ENCODE measurements at regions of chr4 and their contacts with region 1.

Region 1: DNA sequence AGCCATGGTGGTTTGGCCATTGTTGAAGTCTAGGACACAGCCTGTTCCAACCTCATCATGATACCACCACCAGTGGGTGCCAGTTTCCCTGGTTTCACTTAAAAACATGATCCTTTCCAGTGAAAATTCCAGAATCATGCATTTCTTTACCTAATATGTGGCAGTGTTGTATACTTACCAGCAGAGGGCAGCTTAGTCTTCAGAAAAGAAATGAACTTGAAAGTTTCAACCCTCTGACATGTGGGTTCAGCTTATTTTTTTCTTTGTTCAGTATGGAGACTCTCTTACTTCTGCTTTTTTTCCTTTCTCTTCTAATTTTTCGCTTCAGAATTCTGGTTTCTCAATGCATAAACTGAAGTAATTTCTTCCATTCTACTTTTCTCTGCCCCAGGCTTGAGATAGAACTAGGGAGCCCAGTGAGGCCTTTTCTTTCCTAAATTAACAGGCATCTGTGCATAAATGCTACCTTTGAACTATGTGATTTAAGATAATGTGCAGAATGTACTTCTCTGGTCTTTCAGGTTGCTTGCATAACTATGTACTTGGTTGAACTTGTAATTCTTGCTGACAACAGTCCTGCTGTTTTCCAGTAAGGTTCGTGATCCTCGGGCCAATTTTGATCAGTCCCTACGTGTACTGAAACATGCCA is 10.7 kb downstream of the LIAS start:
- DNase-seq: peak; percentile 86
- ATAC-seq: peak; percentile 97
- H3K4me3 ChIP-seq: no peak overlapping the region
- H3K27ac ChIP-seq: peak overlapping the region; percentile 23; the same call in 1 of the 2 replicates
- H3K4me1 ChIP-seq: peaks cover 2 to 13% of the 10 kb centered on the region in 2 experiments; a peak in 2 of 4 replicates
- H3K27me3 ChIP-seq: no peaks in the 10 kb centered on the region
- CTCF ChIP-seq: peak; percentile 81 to 99 (median 97)
- POLR2A ChIP-seq: no peak
- RAD21 ChIP-seq: peak; percentile 96

Region 2: GRCh38 chr4:39458505-39459300 is 10.8 kb before region 1 on chr4 and contains the starts of genes LIAS and RPL9:
- CTCF ChIA-PET with region 1: interaction called, 14 read pairs
- POLR2A ChIA-PET with region 1: interaction called, 14 read pairs
- RAD21 ChIA-PET with region 1: no interaction called
- intact Hi-C with region 1: no loop called
- DNase-seq: peak; percentile 99
- ATAC-seq: peak; percentile 90
- H3K4me3 ChIP-seq: peak within 1 kb of the TSS; percentile 88 to 97
- H3K27ac ChIP-seq: peak within 1 kb of the TSS; percentile 97
- H3K4me1 ChIP-seq: peaks cover 5 to 21% of the 10 kb centered on the region in 2 experiments; a peak in 3 of 4 replicates
- H3K27me3 ChIP-seq: no peaks in the 10 kb centered on the region
- CTCF ChIP-seq: no peak
- POLR2A ChIP-seq: peak; percentile 97
- RAD21 ChIP-seq: no peak
- total RNA-seq, gene LIAS: 23.5 TPM
- total RNA-seq, gene RPL9: 1,657 TPM

Region 3: DNA sequence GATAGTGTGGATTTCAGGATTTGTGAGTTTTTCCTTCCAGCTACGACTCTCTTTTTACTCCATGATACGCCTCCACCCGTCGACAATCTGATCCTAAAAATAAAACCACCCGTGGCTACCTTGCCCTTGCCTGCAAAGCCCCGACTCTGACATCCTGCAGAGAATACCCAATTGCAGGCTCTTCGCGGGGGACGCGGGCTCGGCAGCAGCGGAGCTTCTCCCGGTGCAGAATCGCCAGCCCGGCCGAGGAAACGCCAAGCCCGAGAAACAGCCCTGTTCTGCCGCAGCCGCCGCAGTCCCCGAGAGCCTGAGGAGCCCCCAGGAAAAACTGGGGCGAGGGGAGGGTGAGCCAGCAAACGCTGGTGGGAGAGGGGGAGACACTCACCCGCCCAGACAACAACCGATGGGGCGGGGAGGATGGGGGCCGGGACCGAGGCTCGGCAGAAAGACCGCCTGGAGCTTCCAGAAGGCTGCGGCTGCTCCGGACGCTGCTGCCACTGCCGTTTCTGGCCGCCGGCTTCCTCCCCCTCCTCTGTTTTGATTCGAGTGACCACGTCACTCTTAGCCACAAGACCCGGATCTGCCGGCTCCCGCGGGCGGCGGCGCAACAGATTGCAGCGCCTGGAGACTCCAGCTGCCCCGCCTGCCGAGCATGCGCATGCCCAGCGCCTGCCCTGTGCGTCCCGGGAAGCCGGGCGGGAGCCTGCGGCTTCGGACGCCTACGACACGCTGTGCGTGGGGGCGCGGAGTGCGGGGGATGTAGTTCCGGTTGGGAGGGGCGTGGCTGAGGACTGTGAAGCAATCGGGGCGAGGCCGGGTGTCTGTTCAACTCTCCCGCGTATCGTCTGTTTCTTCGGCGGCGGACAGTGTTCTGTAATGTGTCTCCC is 169.0 kb after region 1 on chr4 and contains the start of gene SMIM14:
- CTCF ChIA-PET with region 1: interaction called, 7 read pairs
- POLR2A ChIA-PET with region 1: interaction called, 3 read pairs
- RAD21 ChIA-PET with region 1: no interaction called
- intact Hi-C with region 1: loop called (anchors 5 kb)
- DNase-seq: peak; percentile 93
- ATAC-seq: peak; percentile 93
- H3K4me3 ChIP-seq: peak within 1 kb of the TSS; percentile 90 to 91
- H3K27ac ChIP-seq: peak within 1 kb of the TSS; percentile 72
- H3K4me1 ChIP-seq: peaks cover 16 to 28% of the 10 kb centered on the region in 2 experiments
- H3K27me3 ChIP-seq: no peaks in the 10 kb centered on the region
- CTCF ChIP-seq: no peak
- POLR2A ChIP-seq: peak; percentile 82
- RAD21 ChIP-seq: peak; percentile 6; the same call in 1 of the 2 replicates
- total RNA-seq, gene SMIM14: 21.6 TPM

Region 4: GRCh38 chr4:39697740-39698423 is 228.3 kb after region 1 on chr4 and contains the start of gene UBE2K:
- CTCF ChIA-PET with region 1: no interaction called
- POLR2A ChIA-PET with region 1: no interaction called
- RAD21 ChIA-PET with region 1: no interaction called
- intact Hi-C with region 1: loop called (anchors 10 kb)
- DNase-seq: peak; percentile 71
- ATAC-seq: peak; percentile 94
- H3K4me3 ChIP-seq: peak within 1 kb of the TSS; percentile 66 to 98
- H3K27ac ChIP-seq: peak within 1 kb of the TSS; percentile 88
- H3K4me1 ChIP-seq: peaks cover 11 to 36% of the 10 kb centered on the region in 2 experiments
- H3K27me3 ChIP-seq: no peaks in the 10 kb centered on the region
- CTCF ChIP-seq: no peak
- POLR2A ChIP-seq: peak; percentile 89
- RAD21 ChIP-seq: no peak
- total RNA-seq, gene UBE2K: 126 TPM

Region 5: DNA sequence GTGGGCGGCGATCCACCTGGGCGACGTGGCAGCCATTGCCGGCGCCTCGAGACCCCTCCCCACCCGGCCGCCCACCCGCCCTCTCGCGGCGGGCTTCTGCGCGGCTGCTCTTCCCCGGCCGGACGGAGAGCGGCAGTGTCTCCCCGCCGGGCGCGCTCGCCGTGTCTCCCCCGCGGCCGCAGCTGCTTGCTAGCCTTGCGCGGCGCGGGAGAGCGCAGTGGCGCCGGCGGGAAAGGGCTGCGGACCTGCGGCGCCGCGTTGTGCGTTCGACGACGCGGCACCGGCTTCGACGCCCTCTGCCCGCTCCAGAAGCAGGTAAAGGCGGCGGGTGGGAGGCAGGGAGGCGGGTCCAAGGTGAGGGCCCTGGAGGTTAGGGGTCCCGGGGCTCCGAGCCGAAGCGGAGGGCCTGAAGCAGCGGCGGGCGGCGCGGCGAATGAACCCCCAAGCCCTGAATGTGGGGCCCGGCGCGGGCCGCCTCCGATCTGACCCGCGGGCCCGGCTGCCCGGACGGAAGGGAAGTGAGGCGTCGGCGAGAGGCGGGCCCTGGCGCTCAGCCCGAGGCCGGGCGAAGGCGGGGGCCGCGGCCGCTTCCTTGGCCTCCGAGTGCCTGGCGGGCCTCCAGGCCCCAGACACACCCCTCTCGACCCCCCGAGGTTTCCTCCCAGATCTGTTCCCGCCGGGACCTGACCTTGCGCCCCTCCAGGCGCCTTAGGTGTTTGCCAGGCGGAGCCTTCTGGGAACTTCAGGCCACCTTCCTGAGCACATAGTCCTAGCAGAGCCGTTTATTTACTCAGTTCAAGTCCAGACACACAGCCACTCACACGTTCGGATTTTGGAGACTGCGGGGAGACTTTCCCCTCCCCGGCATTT is 587.4 kb after region 1 on chr4 and contains the start of gene N4BP2:
- CTCF ChIA-PET with region 1: interaction called, 4 read pairs
- POLR2A ChIA-PET with region 1: no interaction called
- RAD21 ChIA-PET with region 1: no interaction called
- intact Hi-C with region 1: loop called (anchors 10 kb)
- DNase-seq: peak; percentile 57
- ATAC-seq: peak; percentile 64
- H3K4me3 ChIP-seq: peak within 1 kb of the TSS; percentile 72 to 74
- H3K27ac ChIP-seq: peak within 1 kb of the TSS; percentile 91
- H3K4me1 ChIP-seq: peaks cover 13 to 43% of the 10 kb centered on the region in 2 experiments; a peak in 3 of 4 replicates
- H3K27me3 ChIP-seq: no peaks in the 10 kb centered on the region
- CTCF ChIP-seq: peak; percentile 51 to 74 (median 64)
- POLR2A ChIP-seq: no peak
- RAD21 ChIP-seq: peak; percentile 76
- total RNA-seq, gene N4BP2: 7.0 TPM